ENCODE measurements at regions of chr4 and their contacts with region 1.

Region 1: DNA sequence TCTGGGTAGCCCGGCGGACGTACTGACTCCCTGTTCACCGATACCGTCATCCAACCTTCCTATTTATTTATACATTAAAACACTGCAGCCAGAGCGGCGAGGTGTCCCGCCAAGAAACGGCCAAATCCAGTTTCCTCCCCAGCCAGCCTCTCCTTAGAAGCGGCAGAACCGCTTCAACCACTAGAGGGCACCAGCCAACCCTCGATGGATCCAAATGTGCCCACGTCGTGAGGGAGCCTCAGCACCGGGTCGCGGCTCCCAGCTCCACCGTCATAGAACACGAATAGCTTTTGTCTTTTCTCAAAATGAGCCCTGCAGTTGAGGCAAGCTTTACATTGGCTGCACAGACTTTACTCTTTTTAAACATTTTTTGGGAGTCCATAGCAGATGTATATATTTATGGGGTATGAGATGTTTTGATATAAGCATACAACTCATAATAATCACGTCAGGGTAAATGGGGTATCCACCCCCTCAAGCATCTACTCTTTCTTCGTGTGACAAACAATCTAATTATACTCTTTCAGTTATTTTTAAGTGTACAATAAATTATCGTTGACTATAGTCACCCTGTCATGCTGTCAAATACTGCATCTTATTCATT is 13.0 kb upstream of the HELT start:
- DNase-seq: peak in 1 of 2 experiments; percentile 73
- H3K4me3 ChIP-seq: no peak overlapping the region
- H3K27ac ChIP-seq: no peak overlapping the region
- H3K4me1 ChIP-seq: no peaks in the 10 kb centered on the region
- H3K27me3 ChIP-seq: no peaks in the 10 kb centered on the region
- CTCF ChIP-seq: peak; percentile 83

Region 2: DNA sequence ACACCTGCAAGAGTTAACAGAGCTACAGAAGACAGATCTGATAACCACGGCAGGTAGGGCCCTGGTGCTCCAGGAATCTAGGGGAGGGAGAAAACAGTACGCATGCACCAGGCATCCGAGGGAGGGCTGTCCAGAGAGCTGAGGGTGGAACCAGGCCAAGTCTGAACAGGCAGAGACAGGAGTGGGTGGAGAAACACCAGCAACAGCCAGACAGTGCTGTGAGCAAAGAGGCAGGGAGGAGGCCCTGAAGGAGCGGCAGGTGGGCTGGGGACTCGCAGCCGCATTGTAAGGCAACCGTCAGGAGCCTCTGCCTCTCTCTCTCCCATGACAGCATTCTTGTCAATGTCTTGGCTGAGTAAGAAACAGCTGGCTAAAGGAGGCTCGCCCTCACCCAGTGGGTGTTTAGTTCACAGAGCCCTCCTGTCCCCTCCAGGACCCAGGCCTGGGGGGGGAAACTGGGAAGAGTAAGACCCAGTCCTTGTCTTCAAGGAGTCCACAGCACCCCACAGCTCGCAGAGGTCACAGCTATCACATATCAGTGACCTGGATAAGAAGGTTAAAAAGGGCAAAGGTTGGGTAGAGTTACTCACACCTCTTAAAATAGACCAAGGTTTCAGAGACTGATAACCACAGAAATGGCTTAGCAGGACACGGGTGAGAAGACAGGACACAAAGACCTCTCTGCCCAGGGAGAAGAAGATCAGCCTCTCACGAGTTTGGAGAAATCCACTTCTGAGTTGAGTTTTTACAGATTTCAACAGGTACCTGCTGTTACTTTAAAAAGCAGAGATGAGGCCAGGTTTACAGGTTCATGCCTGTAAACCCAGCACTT is 190.1 kb before region 1 on chr4:
- CTCF ChIA-PET with region 1: no interaction called
- POLR2A ChIA-PET with region 1: no interaction called
- intact Hi-C with region 1: no loop called
- DNase-seq: peak; percentile 87
- H3K4me3 ChIP-seq: peak overlapping the region; percentile 44
- H3K27ac ChIP-seq: peak overlapping the region; percentile 85
- H3K4me1 ChIP-seq: peaks cover 57% of the 10 kb centered on the region
- H3K27me3 ChIP-seq: no peaks in the 10 kb centered on the region
- CTCF ChIP-seq: no peak

Region 3: DNA sequence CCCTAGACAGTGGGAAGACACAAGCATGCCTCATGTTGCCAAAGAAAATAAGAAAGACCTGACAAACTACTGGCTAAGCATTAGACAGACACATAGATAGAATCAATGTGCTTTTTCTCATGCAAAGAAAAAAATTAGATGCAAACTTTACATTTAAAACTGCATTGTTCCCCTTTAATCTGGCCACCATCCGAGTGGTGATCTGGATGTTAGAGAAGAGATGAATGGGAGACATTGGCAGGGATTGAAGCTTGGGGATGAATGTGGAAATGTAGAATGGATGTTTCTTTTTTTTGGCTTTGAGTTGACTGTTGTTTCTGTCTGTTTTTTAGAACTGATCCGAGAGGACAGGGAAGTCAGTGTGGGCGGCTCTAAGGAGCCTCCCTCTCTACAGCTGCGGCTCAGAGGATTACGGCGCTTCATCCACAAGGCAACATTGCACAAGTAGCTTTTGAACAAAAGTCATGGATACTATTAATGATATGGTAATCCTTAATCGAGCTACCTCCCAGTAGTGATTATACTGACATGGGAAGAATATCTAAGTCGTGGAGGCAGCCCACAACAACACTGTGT is 66.0 kb after region 1 on chr4:
- CTCF ChIA-PET with region 1: no interaction called
- POLR2A ChIA-PET with region 1: no interaction called
- intact Hi-C with region 1: no loop called
- DNase-seq: no peak
- H3K4me3 ChIP-seq: no peak overlapping the region
- H3K27ac ChIP-seq: no peak overlapping the region
- H3K4me1 ChIP-seq: no peaks in the 10 kb centered on the region
- H3K27me3 ChIP-seq: no peaks in the 10 kb centered on the region
- CTCF ChIP-seq: no peak

Region 4: GRCh38 chr4:185183619-185184281 is 178.4 kb after region 1 on chr4:
- CTCF ChIA-PET with region 1: interaction called, 3 read pairs
- POLR2A ChIA-PET with region 1: no interaction called
- intact Hi-C with region 1: loop called (anchors 5 kb)
- DNase-seq: peak; percentile 46 to 61
- H3K4me3 ChIP-seq: no peak overlapping the region
- H3K27ac ChIP-seq: no peak overlapping the region
- H3K4me1 ChIP-seq: no peaks in the 10 kb centered on the region
- H3K27me3 ChIP-seq: no peaks in the 10 kb centered on the region
- CTCF ChIP-seq: peak; percentile 73

Region 5: DNA sequence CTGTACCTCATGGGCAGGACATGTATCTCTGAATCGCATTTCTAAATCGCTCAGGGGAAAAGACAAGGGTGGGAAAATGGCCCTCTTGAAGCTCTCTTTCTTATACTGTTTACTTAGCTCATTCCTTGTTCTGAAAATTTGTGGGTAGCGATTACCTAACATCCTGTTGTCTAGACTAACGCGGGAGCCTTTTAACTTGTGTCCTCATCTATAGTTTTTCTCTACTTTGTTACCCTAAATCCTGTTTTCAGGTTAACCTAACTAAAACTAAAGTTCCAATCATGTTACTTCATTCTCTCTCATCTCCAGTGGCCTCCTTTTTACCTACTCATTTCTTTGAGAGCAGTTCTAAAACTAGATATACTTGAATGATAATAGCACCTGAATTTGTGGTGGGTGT is 249.1 kb after region 1 on chr4:
- CTCF ChIA-PET with region 1: no interaction called
- POLR2A ChIA-PET with region 1: no interaction called
- intact Hi-C with region 1: no loop called
- DNase-seq: no peak
- H3K4me3 ChIP-seq: no peak overlapping the region
- H3K27ac ChIP-seq: no peak overlapping the region
- H3K4me1 ChIP-seq: 0 out of 2 replicates have a peak, but pooled peaks cover 5% of the 10 kb centered on the region
- H3K27me3 ChIP-seq: no peaks in the 10 kb centered on the region
- CTCF ChIP-seq: no peak

Measured in PC-9 (cell line).